ENCODE measurements at regions of chr10 and their contacts with region 1.

Region 1: DNA sequence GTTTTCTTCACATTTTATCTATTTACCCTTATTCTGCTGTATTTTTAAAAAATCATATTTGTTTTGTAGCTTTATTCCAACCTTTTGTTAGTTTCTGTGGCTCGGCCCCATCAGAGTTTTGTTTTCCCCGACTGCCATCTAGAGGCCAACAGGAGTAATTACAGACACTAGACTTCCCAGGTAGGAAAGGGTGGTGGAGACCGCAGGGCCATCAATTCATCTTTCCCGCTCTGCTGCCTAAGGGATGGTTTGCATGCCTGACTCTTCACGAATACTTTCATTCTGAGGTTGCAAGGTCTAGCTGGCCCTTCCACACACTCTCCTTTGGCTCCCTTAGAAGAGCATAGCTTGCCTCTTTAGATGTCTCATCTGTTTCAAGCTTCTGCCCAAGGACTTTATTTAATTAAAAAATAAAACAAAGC is 38.3 kb downstream of the LYZL2 start:
- DNase-seq: no peak
- ATAC-seq: peak; percentile 69; the same call in 1 of the 2 replicates
- H3K4me3 ChIP-seq: no peak overlapping the region
- H3K27ac ChIP-seq: no peak overlapping the region
- H3K4me1 ChIP-seq: no peaks in the 10 kb centered on the region
- H3K27me3 ChIP-seq: no peaks in the 10 kb centered on the region
- CTCF ChIP-seq: peak; percentile 81

Region 2: GRCh38 chr10:30392564-30392990 is 198.7 kb before region 1 on chr10:
- CTCF ChIA-PET with region 1: interaction called, 3 read pairs
- POLR2A ChIA-PET with region 1: no interaction called
- in situ Hi-C with region 1: no loop called
- intact Hi-C with region 1: loop called (anchors 5 kb)
- DNase-seq: peak; percentile 52
- ATAC-seq: peak; percentile 100
- H3K4me3 ChIP-seq: no peak overlapping the region
- H3K27ac ChIP-seq: no peak overlapping the region
- H3K4me1 ChIP-seq: no peaks in the 10 kb centered on the region
- H3K27me3 ChIP-seq: 0 out of 2 replicates have a peak, but pooled peaks cover 3% of the 10 kb centered on the region
- CTCF ChIP-seq: peak; percentile 88

Region 3: DNA sequence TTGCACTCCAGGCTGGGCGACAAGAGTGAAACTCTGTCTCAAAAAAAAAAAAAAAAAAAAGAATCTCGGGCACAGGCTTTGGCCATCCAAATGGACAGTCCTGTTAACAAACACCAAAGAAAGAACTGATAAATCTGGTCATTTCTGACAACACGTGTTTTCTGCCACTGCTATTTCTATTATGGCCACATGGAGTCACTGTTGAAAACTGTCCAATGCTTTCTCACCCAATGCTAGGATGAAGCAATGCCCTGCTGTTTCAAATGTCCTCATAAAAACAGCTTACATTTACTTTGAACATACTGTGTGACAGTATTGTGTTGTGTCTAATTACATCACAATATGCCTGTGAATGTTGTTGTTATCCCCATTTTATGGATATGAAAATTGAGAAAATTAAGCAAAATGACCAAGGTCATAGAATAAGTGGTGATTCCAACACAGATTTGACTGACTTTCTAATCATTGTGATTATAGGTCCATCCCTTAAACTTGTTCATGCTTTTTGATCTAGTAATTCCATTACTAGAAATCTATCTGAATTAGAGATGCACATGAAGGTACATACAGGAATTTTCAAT is 177.2 kb before region 1 on chr10:
- CTCF ChIA-PET with region 1: interaction called, 10 read pairs
- POLR2A ChIA-PET with region 1: no interaction called
- in situ Hi-C with region 1: no loop called
- intact Hi-C with region 1: no loop called
- DNase-seq: no peak
- ATAC-seq: peak; percentile 78
- H3K4me3 ChIP-seq: no peak overlapping the region
- H3K27ac ChIP-seq: no peak overlapping the region
- H3K4me1 ChIP-seq: no peaks in the 10 kb centered on the region
- H3K27me3 ChIP-seq: no peaks in the 10 kb centered on the region
- CTCF ChIP-seq: peak; percentile 74